HepG2 (cell line): ENCODE measurements at regions of chr6 and their contacts with region 1.

Region 1: DNA sequence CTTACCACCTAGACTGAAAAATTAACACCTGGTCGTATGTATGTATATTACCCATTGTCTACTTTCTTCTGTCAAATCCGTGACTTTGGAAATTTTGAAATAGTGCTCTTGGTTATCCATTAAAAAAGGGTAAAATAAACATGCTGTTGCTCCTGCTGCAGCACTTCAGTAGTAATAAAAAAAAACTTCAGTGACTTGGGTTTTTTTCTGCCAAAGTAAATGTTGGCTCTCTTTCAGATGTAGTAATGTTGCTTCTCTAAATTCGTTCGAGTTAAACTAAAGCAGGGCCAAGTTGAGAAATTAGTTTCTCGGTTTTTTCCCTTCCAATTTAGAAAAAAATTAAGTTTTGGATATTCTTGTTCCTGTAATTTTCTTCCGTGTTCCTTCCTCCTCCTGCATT is 34.2 kb downstream of the JARID2 start:
- DNase-seq: peak; percentile 44
- ATAC-seq: no peak
- H3K4me3 ChIP-seq: peak overlapping the region in 2 of 3 experiments; percentile 28 to 47; a peak in 1 of 6 replicates
- H3K27ac ChIP-seq: peak overlapping the region; percentile 63
- H3K4me1 ChIP-seq: peaks cover 84% of the 10 kb centered on the region
- H3K27me3 ChIP-seq: no peaks in the 10 kb centered on the region
- CTCF ChIP-seq: no peak
- EP300 ChIP-seq: peak in 1 of 2 experiments; percentile 32; a peak in 1 of 4 replicates
- POLR2A ChIP-seq: no peak
- RAD21 ChIP-seq: no peak

Region 2: GRCh38 chr6:15264902-15265761 is 14.9 kb before region 1 on chr6:
- CTCF ChIA-PET with region 1: no interaction called
- POLR2A ChIA-PET with region 1: interaction called, 21 read pairs
- in situ Hi-C with region 1: no loop called
- intact Hi-C with region 1: loop called (anchors 2 kb)
- DNase-seq: no peak
- ATAC-seq: peak; percentile 10
- H3K4me3 ChIP-seq: no peak overlapping the region
- H3K27ac ChIP-seq: peak overlapping the region; percentile 76
- H3K4me1 ChIP-seq: peaks cover 64% of the 10 kb centered on the region
- H3K27me3 ChIP-seq: no peaks in the 10 kb centered on the region
- CTCF ChIP-seq: no peak
- EP300 ChIP-seq: no peak
- POLR2A ChIP-seq: no peak
- RAD21 ChIP-seq: no peak

Region 3: DNA sequence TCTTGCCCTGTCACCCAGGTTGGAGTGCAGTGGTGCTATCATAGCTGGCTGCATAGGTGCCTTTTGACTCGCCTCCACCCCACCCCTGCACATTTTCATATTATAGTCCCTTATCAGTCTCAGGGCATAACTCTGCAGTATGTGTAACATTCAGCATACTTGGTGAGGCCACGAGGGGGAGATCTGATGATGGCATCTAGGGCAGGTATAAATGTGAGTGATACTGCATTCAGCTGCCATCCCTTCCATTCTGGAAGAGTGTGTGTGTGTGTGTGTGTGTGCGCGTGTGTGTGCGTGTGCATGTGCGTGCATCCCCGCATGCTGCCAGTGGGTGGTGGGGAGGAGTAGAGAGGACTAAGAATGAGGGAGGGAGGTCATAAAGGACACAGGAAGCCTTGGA is 47.2 kb after region 1 on chr6:
- CTCF ChIA-PET with region 1: no interaction called
- POLR2A ChIA-PET with region 1: interaction called, 3 read pairs
- in situ Hi-C with region 1: no loop called
- intact Hi-C with region 1: loop called (anchors 5 kb)
- DNase-seq: no peak
- ATAC-seq: no peak
- H3K4me3 ChIP-seq: no peak overlapping the region
- H3K27ac ChIP-seq: no peak overlapping the region
- H3K4me1 ChIP-seq: peaks cover 59% of the 10 kb centered on the region
- H3K27me3 ChIP-seq: no peaks in the 10 kb centered on the region
- CTCF ChIP-seq: no peak
- EP300 ChIP-seq: no peak
- POLR2A ChIP-seq: no peak
- RAD21 ChIP-seq: no peak

Region 4: GRCh38 chr6:15365273-15365687 is 85.3 kb after region 1 on chr6:
- CTCF ChIA-PET with region 1: no interaction called
- POLR2A ChIA-PET with region 1: no interaction called
- in situ Hi-C with region 1: no loop called
- intact Hi-C with region 1: no loop called
- DNase-seq: no peak
- ATAC-seq: no peak
- H3K4me3 ChIP-seq: no peak overlapping the region
- H3K27ac ChIP-seq: no peak overlapping the region
- H3K4me1 ChIP-seq: peaks cover 41% of the 10 kb centered on the region
- H3K27me3 ChIP-seq: no peaks in the 10 kb centered on the region
- CTCF ChIP-seq: no peak
- EP300 ChIP-seq: no peak
- POLR2A ChIP-seq: no peak
- RAD21 ChIP-seq: no peak

Region 5: DNA sequence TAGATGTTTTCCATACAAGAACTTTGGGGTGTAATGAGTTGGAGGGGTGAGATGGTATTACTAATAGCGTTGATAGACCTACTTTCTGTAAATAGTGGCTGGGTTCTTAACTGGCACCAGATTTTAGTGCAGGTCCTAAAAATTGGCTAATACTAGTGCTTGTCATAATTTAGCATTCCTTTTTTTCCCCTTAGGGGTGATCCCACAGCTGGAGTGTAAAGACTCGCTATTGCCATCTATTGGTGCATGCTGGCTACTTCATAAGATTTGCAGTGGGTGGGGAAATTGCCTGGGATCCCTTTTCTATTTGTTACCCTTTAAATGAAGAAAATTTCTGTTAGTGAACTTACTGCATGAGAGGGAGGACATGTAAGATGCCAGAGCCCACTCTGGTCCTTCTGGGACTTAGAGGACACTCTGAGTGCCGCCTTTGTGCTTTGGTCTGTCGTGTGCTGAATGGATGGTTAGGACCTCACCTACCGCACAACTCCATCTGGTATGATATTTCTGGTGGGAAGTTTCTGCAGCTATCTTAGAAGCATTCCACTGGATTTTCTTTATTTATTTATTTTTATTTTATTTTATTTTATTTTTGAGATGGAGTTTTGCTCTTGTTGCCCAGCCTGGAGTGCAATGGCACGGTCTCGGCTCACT is 161.3 kb after region 1 on chr6:
- CTCF ChIA-PET with region 1: no interaction called
- POLR2A ChIA-PET with region 1: no interaction called
- in situ Hi-C with region 1: no loop called
- intact Hi-C with region 1: no loop called
- DNase-seq: peak; percentile 65
- ATAC-seq: peak; percentile 82
- H3K4me3 ChIP-seq: no peak overlapping the region
- H3K27ac ChIP-seq: no peak overlapping the region
- H3K4me1 ChIP-seq: peaks cover 15% of the 10 kb centered on the region
- H3K27me3 ChIP-seq: no peaks in the 10 kb centered on the region
- CTCF ChIP-seq: peak; percentile 81
- EP300 ChIP-seq: no peak
- POLR2A ChIP-seq: no peak
- RAD21 ChIP-seq: peak; percentile 69

Region 6: GRCh38 chr6:15955944-15956735 is 676.1 kb after region 1 on chr6:
- CTCF ChIA-PET with region 1: no interaction called
- POLR2A ChIA-PET with region 1: no interaction called
- in situ Hi-C with region 1: no loop called
- intact Hi-C with region 1: no loop called
- DNase-seq: peak; percentile 44
- ATAC-seq: peak; percentile 45
- H3K4me3 ChIP-seq: peak overlapping the region in 1 of 3 experiments; percentile 29; a peak in 2 of 6 replicates
- H3K27ac ChIP-seq: no peak overlapping the region
- H3K4me1 ChIP-seq: peaks cover 21% of the 10 kb centered on the region
- H3K27me3 ChIP-seq: peaks cover 1 to 38% of the 10 kb centered on the region in 2 experiments; a peak in 4 of 5 replicates
- CTCF ChIP-seq: no peak
- EP300 ChIP-seq: no peak
- POLR2A ChIP-seq: no peak
- RAD21 ChIP-seq: no peak